ENCODE measurements at regions of chr15 and their contacts with region 1.

Region 1: GRCh38 chr15:32794973-32795372 is 77.2 kb downstream of the GREM1 start:
- DNase-seq: peak; percentile 60
- H3K4me3 ChIP-seq: no peak overlapping the region
- H3K27ac ChIP-seq: no peak overlapping the region
- H3K4me1 ChIP-seq: no peaks in the 10 kb centered on the region
- H3K27me3 ChIP-seq: no peaks in the 10 kb centered on the region
- CTCF ChIP-seq: no peak

Region 2: GRCh38 chr15:32669896-32670619 is 124.9 kb before region 1 on chr15:
- CTCF ChIA-PET with region 1: no interaction called
- dilution Hi-C with region 1: no loop called
- in situ Hi-C with region 1: no loop called
- intact Hi-C with region 1: no loop called
- DNase-seq: peak; percentile 69
- H3K4me3 ChIP-seq: no peak overlapping the region
- H3K27ac ChIP-seq: no peak overlapping the region
- H3K4me1 ChIP-seq: peaks cover 12% of the 10 kb centered on the region
- H3K27me3 ChIP-seq: no peaks in the 10 kb centered on the region
- CTCF ChIP-seq: no peak

Region 3: DNA sequence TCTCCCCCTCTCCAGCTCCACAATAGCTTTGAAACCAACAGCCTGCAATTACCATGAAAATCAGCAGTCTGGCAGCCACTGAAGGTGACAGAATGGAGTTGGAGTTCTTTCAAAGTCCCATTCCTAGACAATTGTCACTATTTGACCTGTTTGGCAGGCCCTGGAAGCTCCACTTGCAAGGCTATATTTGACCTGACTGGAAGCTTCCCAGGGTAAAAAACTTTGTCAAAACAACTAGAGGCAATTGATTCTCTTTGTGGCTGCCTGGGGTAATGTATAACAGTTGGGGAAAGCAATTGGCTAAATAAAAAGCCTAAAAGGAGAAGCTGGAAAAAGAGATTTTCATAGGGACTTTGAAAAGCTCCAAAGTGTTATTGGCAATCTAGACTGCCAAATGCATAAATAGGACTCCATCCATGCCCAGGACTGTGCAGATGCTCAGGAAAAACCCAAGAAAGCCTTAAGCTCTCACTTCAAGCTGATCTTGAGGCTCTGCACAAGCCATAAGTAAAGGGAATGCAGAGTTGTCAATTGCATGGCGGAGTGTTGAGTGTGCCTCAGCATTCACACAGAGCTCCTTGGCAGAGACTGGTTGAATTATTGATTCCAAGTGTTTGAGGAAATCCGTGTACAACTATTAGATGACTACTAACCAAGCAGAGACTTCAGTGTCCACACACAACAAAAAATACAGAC is 58.8 kb before region 1 on chr15:
- CTCF ChIA-PET with region 1: no interaction called
- dilution Hi-C with region 1: loop called (anchors 5 kb)
- in situ Hi-C with region 1: no loop called
- intact Hi-C with region 1: no loop called
- DNase-seq: no peak
- H3K4me3 ChIP-seq: no peak overlapping the region
- H3K27ac ChIP-seq: no peak overlapping the region
- H3K4me1 ChIP-seq: no peaks in the 10 kb centered on the region
- H3K27me3 ChIP-seq: no peaks in the 10 kb centered on the region
- CTCF ChIP-seq: no peak

Measured in mammary epithelial cell (primary cell).